ENCODE measurements at regions of chr12 and their contacts with region 1.

Region 1: DNA sequence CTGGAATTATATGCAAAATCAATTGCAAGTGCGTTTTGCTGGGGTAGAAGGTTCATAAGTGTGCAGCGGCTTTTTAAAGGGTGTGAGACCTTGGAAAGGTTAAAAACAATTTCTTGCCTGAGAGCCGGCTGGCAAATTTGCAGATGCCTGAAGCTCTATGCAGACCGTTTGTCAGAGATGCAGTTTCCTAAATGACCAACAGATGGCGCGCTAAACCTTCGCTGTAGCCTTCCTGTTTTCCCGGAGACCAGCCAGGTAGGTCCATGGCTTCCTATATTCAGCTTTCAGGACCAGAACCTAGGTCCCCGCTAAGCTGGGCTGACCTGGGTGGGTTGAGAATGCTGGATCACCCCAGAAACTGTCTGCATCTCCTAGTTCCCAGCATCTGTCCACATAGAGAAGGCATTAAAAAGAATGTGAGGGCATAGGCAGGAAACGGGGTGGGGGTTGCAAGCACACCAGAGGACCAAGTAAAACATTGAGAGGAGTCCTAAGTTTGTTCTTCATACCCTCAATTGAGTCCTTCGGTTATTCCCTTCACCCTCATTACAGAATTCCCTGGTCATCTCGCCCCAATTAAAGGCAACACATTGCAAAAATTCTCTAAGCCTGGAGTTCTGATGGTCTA is 5.7 kb upstream of the NOS1 start:
- DNase-seq: peak; percentile 78
- H3K4me3 ChIP-seq: no peak overlapping the region
- H3K27ac ChIP-seq: no peak overlapping the region
- H3K4me1 ChIP-seq: no peaks in the 10 kb centered on the region
- H3K27me3 ChIP-seq: peaks cover 39% of the 10 kb centered on the region
- CTCF ChIP-seq: peak; percentile 81 to 91 (median 87)
- EP300 ChIP-seq: no peak
- POLR2A ChIP-seq: no peak

Region 2: GRCh38 chr12:117596968-117597367 is 229.8 kb after region 1 on chr12:
- in situ Hi-C with region 1: loop called in 3 of 4 experiments (anchors 5 to 10 kb)
- intact Hi-C with region 1: no loop called
- DNase-seq: no peak
- H3K4me3 ChIP-seq: no peak overlapping the region
- H3K27ac ChIP-seq: no peak overlapping the region
- H3K4me1 ChIP-seq: no peaks in the 10 kb centered on the region
- H3K27me3 ChIP-seq: no peaks in the 10 kb centered on the region
- CTCF ChIP-seq: no peak
- EP300 ChIP-seq: no peak
- POLR2A ChIP-seq: no peak